ENCODE measurements at regions of chr2 and their contacts with region 1.

Region 1: GRCh38 chr2:38076606-38077430 is 867 bp upstream of the CYP1B1 start:
- DNase-seq: peak; percentile 84
- H3K4me3 ChIP-seq: peak overlapping the region; percentile 40 to 54 (median 41)
- H3K27ac ChIP-seq: peak overlapping the region; percentile 72
- H3K4me1 ChIP-seq: peaks cover 30% of the 10 kb centered on the region
- H3K27me3 ChIP-seq: no peaks in the 10 kb centered on the region
- CTCF ChIP-seq: peak; percentile 9 to 42

Region 2: DNA sequence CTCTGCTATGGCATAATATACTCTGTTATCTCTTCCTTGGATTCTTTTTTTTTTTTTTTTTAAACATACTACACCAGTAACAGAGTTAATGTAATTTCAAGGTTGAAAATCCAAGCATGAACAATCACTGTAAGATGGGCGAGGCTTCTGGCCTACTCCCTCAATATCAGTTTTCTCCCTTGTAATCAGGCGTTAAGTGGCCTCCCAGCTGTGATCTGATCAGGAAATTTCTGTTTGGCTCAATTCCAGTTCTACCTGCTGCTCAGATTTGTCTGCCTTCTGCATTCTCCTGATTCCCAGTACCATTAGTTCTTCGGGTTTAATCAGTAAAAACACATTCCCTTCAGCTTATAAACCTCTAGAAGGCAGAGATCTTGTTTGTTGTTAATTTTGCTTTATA is 770.8 kb before region 1 on chr2:
- CTCF ChIA-PET with region 1: no interaction called
- dilution Hi-C with region 1: no loop called
- in situ Hi-C with region 1: no loop called
- intact Hi-C with region 1: no loop called
- DNase-seq: no peak
- H3K4me3 ChIP-seq: no peak overlapping the region
- H3K27ac ChIP-seq: no peak overlapping the region
- H3K4me1 ChIP-seq: peaks cover 3% of the 10 kb centered on the region
- H3K27me3 ChIP-seq: no peaks in the 10 kb centered on the region
- CTCF ChIP-seq: no peak

Region 3: DNA sequence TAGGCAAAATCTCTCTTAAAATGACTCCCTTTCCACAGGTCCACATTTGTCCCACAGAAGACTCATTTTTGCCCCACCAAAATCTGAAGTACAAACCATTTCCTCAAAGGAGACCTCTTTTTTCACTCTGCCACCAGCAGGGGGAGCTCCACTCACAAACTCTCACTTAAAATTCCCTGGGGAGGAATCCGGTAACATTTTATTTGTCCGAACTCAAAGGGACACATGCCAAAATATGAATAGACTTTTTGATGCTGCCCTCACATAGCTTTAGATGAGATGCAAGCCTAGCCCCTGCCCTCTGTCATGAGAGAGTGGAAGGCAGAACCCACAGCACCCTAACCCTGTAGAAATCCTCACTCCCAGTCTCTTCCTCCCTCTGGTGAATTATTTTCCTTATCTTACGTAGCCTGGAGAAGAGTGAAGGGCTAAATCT is 94.7 kb before region 1 on chr2:
- CTCF ChIA-PET with region 1: no interaction called
- dilution Hi-C with region 1: no loop called
- in situ Hi-C with region 1: no loop called
- intact Hi-C with region 1: loop called (anchors 1 kb)
- DNase-seq: peak; percentile 52
- H3K4me3 ChIP-seq: no peak overlapping the region
- H3K27ac ChIP-seq: no peak overlapping the region
- H3K4me1 ChIP-seq: peaks cover 11% of the 10 kb centered on the region
- H3K27me3 ChIP-seq: no peaks in the 10 kb centered on the region
- CTCF ChIP-seq: peak; percentile 77 to 80

Region 4: GRCh38 chr2:38095996-38096861 is 19.4 kb after region 1 on chr2:
- CTCF ChIA-PET with region 1: interaction called, 11 read pairs
- dilution Hi-C with region 1: no loop called
- in situ Hi-C with region 1: no loop called
- intact Hi-C with region 1: loop called (anchors 1 kb)
- DNase-seq: peak; percentile 89
- H3K4me3 ChIP-seq: no peak overlapping the region
- H3K27ac ChIP-seq: peak overlapping the region; percentile 85
- H3K4me1 ChIP-seq: peaks cover 57% of the 10 kb centered on the region
- H3K27me3 ChIP-seq: no peaks in the 10 kb centered on the region
- CTCF ChIP-seq: no peak

Region 5: DNA sequence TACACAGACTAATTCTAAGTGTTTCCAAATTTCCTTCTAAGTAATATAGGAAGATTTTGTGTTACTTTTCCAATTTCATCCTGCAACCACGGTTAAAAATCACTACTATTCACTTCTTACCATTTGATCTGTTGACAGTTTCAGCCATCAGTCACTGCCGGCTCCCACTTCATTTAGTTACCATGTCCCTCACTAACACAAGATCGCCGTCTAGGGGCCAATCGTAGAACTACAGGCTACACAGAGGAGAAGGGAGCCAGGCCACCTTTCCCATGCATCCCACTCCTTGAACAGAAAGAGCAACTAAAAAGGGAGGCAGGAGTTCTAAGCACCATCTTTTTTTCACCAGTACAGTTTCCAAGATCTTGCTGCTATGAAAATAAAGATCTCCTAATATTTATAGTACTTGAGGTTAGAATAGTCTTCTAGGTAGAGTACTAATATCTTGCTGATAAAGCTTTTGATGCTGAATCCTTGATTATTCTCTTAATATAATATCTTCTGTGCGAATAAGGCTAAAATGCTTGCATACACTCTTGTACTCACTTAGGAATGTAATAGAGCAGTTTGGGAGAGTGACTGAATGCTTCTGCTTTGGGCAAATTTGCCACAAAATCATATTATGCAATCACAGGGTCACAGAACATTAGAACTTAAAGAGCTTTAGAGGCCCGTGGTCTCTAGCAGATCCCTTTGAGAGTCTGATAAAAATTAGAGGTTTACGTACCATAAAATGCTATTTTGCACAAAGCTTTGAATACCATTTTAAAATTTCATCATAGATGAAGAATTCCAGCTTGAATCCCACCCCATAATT is 38.6 kb after region 1 on chr2:
- CTCF ChIA-PET with region 1: interaction called, 15 read pairs
- dilution Hi-C with region 1: no loop called
- in situ Hi-C with region 1: no loop called
- intact Hi-C with region 1: loop called (anchors 1 kb)
- DNase-seq: peak; percentile 70
- H3K4me3 ChIP-seq: no peak overlapping the region
- H3K27ac ChIP-seq: peak overlapping the region; percentile 29
- H3K4me1 ChIP-seq: peaks cover 25% of the 10 kb centered on the region
- H3K27me3 ChIP-seq: no peaks in the 10 kb centered on the region
- CTCF ChIP-seq: peak; percentile 100

Region 6: GRCh38 chr2:38164881-38165280 is 88.1 kb after region 1 on chr2:
- CTCF ChIA-PET with region 1: interaction called, 23 read pairs
- dilution Hi-C with region 1: loop called (anchors 5 kb)
- in situ Hi-C with region 1: no loop called
- intact Hi-C with region 1: no loop called
- DNase-seq: no peak
- H3K4me3 ChIP-seq: no peak overlapping the region
- H3K27ac ChIP-seq: no peak overlapping the region
- H3K4me1 ChIP-seq: peaks cover 19% of the 10 kb centered on the region
- H3K27me3 ChIP-seq: no peaks in the 10 kb centered on the region
- CTCF ChIP-seq: no peak

Region 7: DNA sequence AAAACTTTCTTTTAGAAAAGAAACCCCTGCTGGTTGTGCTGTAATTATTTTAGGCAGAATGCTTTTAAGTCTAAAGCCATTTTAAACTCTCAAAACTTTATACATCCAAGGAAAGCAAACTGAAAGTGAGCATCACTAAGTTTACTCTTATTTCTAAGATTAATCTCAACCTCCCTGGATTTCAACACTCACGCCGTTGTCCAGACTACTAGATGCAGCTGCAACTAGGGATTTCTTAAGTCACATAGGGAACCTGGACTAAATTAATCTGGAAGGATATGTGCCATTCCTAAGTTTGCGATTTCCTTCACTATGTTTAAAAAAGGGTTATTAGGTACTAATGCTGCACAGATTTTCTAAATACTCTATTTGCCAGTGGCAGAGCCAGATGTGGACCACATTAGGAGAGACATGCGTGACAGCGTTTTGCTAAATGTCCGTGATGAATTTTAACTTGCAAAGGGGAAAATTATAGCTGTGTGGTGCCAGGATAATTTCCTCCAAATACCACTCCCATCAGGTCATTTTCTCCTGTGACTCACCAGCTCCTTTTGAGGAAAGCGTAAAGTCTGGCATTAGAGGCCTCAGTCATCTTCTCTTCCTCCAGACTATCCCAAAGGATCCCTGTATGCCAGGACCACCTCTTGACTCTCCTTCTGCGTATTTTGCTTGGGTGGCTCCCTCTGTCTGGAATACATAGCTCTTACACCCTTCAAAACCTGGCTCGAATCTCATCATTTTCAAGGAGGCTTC is 156.6 kb after region 1 on chr2:
- CTCF ChIA-PET with region 1: no interaction called
- dilution Hi-C with region 1: no loop called
- in situ Hi-C with region 1: no loop called
- intact Hi-C with region 1: no loop called
- DNase-seq: no peak
- H3K4me3 ChIP-seq: no peak overlapping the region
- H3K27ac ChIP-seq: no peak overlapping the region
- H3K4me1 ChIP-seq: no peaks in the 10 kb centered on the region
- H3K27me3 ChIP-seq: no peaks in the 10 kb centered on the region
- CTCF ChIP-seq: no peak

Region 8: GRCh38 chr2:38254796-38255195 is 178.0 kb after region 1 on chr2:
- CTCF ChIA-PET with region 1: no interaction called
- dilution Hi-C with region 1: no loop called
- in situ Hi-C with region 1: no loop called
- intact Hi-C with region 1: no loop called
- DNase-seq: no peak
- H3K4me3 ChIP-seq: no peak overlapping the region
- H3K27ac ChIP-seq: no peak overlapping the region
- H3K4me1 ChIP-seq: no peaks in the 10 kb centered on the region
- H3K27me3 ChIP-seq: no peaks in the 10 kb centered on the region
- CTCF ChIP-seq: no peak

Region 9: GRCh38 chr2:38274286-38275276 is 197.8 kb after region 1 on chr2:
- CTCF ChIA-PET with region 1: interaction called, 53 read pairs
- dilution Hi-C with region 1: no loop called
- in situ Hi-C with region 1: no loop called
- intact Hi-C with region 1: loop called (anchors 1 kb)
- DNase-seq: peak; percentile 58
- H3K4me3 ChIP-seq: no peak overlapping the region
- H3K27ac ChIP-seq: no peak overlapping the region
- H3K4me1 ChIP-seq: no peaks in the 10 kb centered on the region
- H3K27me3 ChIP-seq: no peaks in the 10 kb centered on the region
- CTCF ChIP-seq: peak; percentile 56 to 65

Region 10: GRCh38 chr2:38508311-38509039 is 431.7 kb after region 1 on chr2:
- CTCF ChIA-PET with region 1: interaction called, 3 read pairs
- dilution Hi-C with region 1: no loop called
- in situ Hi-C with region 1: no loop called
- intact Hi-C with region 1: loop called (anchors 5 kb)
- DNase-seq: peak; percentile 70
- H3K4me3 ChIP-seq: no peak overlapping the region
- H3K27ac ChIP-seq: no peak overlapping the region
- H3K4me1 ChIP-seq: peaks cover 24% of the 10 kb centered on the region
- H3K27me3 ChIP-seq: no peaks in the 10 kb centered on the region
- CTCF ChIP-seq: peak; percentile 68 to 75